ENCODE measurements at regions of chr19 and their contacts with region 1.

Region 1: GRCh38 chr19:11380653-11381534 is 3.2 kb downstream of the EPOR start:
- DNase-seq: peak; percentile 98
- ATAC-seq: peak; percentile 82
- H3K4me3 Mint-ChIP-seq: peak overlapping the region; percentile 91
- H3K27ac Mint-ChIP-seq: peak overlapping the region; percentile 100
- H3K4me1 Mint-ChIP-seq: peaks cover 32% of the 10 kb centered on the region
- H3K27me3 Mint-ChIP-seq: peaks cover 3% of the 10 kb centered on the region; the same call in 1 of the 2 replicates
- CTCF ChIP-seq: no peak; the same call in 1 of the 2 replicates

Region 2: GRCh38 chr19:11346092-11346940 is 34.6 kb before region 1 on chr19 and contains the starts of genes CCDC159 and TMEM205:
- CTCF ChIA-PET with region 1: interaction called, 20 read pairs
- POLR2A ChIA-PET with region 1: interaction called, 10 read pairs
- DNase-seq: peak; percentile 99
- ATAC-seq: peak; percentile 96
- H3K4me3 Mint-ChIP-seq: peak within 1 kb of the TSS; percentile 95
- H3K27ac Mint-ChIP-seq: peak within 1 kb of the TSS; percentile 87
- H3K4me1 Mint-ChIP-seq: peaks cover 24% of the 10 kb centered on the region
- H3K27me3 Mint-ChIP-seq: peaks cover 20% of the 10 kb centered on the region; the same call in 1 of the 2 replicates
- CTCF ChIP-seq: no peak
- total RNA-seq, gene CCDC159: 5.5 to 8.5 TPM (median 6.8 TPM) in 3 replicates
- total RNA-seq, gene TMEM205: 69.9 to 78.3 TPM (median 76.0 TPM) in 3 replicates

Region 3: GRCh38 chr19:11390933-11391680 is 10.2 kb after region 1 on chr19:
- CTCF ChIA-PET with region 1: interaction called, 26 read pairs
- POLR2A ChIA-PET with region 1: interaction called, 5 read pairs
- DNase-seq: no peak
- ATAC-seq: no peak
- H3K4me3 Mint-ChIP-seq: no peak overlapping the region
- H3K27ac Mint-ChIP-seq: no peak overlapping the region
- H3K4me1 Mint-ChIP-seq: peaks cover 6% of the 10 kb centered on the region
- H3K27me3 Mint-ChIP-seq: no peaks in the 10 kb centered on the region; the same call in 1 of the 2 replicates
- CTCF ChIP-seq: no peak

Region 4: DNA sequence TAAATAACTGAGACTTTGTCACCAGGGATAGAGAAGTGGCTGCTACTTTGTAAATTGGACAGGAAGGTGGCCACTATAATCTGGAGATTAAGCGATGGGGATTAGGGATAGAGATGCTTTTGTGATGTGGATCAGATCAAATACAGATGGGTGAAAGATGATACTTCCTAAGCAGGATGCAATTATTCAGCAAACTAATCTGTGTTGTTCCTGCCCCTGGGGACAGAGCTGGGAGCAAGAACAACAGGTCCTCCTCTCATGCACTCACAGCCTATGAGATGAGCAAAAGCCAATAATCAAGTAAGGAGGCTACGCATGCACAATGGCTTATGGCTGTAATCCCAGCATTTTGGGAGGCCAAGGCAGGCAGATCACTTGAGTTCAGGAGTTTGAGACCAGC is 33.6 kb after region 1 on chr19:
- CTCF ChIA-PET with region 1: interaction called, 308 read pairs
- POLR2A ChIA-PET with region 1: interaction called, 115 read pairs
- DNase-seq: no peak
- ATAC-seq: no peak
- H3K4me3 Mint-ChIP-seq: no peak overlapping the region
- H3K27ac Mint-ChIP-seq: no peak overlapping the region
- H3K4me1 Mint-ChIP-seq: peaks cover 9% of the 10 kb centered on the region
- H3K27me3 Mint-ChIP-seq: peaks cover 5% of the 10 kb centered on the region
- CTCF ChIP-seq: no peak

Region 5: DNA sequence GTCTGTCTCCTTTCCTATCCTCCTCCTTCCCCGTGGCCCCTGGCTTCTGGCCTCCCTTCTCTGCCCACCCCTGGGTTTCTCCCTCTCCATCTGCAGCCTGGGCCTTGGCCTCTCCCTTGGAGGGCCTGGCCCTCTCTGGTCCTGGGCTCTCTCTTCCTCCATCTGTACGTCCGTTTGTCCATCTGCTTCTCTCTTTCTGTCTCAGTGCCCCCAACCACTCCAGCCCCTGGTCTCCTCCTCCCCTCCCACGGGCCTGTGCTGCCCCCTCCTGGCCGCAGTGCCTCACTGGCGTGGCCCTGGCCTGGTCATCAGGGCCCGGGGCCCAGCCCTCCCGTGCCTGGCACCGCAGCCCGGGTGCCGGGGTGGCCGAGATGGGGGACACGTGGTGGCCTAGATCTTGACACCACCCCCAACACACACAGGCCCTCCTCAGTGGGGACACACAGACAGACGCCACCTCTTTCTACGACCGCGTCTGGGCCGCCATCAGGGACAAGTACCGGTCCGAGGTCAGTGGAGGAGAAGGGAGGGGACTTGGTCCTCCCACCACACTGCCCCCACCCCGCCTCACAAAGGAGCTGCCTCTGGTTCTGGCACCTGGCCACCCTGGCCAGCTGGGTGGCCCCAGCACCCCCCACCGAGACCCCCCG is 65.9 kb after region 1 on chr19:
- CTCF ChIA-PET with region 1: interaction called, 103 read pairs
- POLR2A ChIA-PET with region 1: interaction called, 4 read pairs
- DNase-seq: peak; percentile 88
- ATAC-seq: peak; percentile 83
- H3K4me3 Mint-ChIP-seq: no peak overlapping the region
- H3K27ac Mint-ChIP-seq: no peak overlapping the region
- H3K4me1 Mint-ChIP-seq: peaks cover 7% of the 10 kb centered on the region
- H3K27me3 Mint-ChIP-seq: no peaks in the 10 kb centered on the region; the same call in 1 of the 2 replicates
- CTCF ChIP-seq: peak; percentile 77

Measured in WTC11 (cell line).